HEK293T (cell line): ENCODE measurements at regions of chr4 and their contacts with region 1.

Region 1: GRCh38 chr4:181528570-181529184 is 714.5 kb upstream of the TENM3 start:
- DNase-seq: peak; percentile 55

Region 2: GRCh38 chr4:181143250-181143854 is 385.3 kb before region 1 on chr4:
- CTCF ChIA-PET with region 1: interaction called, 11 read pairs
- POLR2A ChIA-PET with region 1: no interaction called
- DNase-seq: peak; percentile 26

Region 3: DNA sequence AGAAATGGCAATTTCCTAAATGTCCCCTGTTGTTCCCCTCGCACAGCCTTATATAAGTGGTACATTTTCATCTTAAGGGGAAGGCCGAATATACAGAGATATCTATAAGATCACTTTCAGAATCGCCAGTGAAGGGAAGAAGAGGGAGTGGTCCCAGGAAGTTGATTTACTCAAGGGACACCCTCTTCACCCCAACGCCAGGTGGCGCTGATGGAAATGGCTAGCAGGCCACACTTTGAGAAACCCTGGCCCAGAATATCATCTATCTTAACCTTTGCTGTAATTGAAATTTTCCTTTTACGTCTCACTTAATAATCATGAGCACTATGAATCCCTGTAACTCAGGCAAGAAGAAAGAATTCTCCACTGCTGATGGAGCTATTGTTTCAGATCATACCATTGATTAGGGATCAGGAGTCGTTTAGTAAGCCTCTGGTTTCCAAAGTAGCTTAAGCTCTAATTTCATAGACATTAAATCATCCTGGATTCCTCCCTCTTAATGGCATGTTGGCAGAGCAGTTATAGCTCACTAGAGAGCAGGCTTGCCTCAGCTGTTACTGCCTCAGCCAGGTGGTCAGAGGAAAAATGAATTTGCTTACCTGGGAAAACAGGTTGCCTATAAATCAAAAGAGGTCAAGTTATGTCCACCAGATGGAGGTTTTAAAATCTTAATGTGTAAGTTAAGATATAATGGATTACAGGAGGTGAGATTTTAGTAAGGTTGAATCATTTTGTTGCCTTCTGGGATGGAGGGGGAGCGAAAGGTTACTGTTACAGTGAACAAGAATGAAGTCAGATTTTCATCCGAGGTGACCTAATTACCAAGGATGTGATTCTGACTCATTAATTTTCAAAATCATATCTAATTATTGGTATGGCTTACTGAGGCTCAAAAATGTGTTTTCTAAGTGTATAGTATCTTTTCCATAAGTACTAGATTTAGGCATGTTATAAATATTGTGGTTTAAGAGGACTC is 226.7 kb before region 1 on chr4:
- CTCF ChIA-PET with region 1: interaction called, 29 read pairs
- POLR2A ChIA-PET with region 1: no interaction called
- DNase-seq: peak; percentile 34